CD4-positive, alpha-beta memory T cell (primary cell): ENCODE measurements at regions of chr10 and their contacts with region 1.

Region 1: DNA sequence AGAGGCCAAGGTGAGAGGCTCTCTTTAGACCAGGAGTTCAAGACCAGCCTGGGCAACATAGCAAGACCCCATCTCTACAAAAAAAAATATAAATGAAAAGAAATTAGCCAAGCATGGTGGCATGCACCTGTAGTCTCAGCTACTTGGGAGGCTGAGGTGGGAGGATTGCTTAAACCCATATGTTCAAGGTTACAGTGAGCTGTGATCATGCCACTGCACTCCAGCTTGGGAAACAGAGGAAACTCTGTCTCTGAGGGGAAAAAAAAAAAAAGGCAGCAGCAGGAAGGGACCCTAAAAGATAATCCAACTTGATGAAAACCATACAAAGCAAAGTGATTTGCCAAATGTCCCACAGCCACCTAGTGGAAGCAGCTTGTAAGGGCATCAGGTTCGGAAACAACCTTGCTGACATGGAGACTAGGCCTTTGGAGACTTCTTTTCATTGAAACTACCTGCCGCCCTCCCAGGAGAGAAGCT is 15.6 kb upstream of the PBLD start:
- DNase-seq: peak; percentile 42 to 58 (median 49)
- H3K4me3 ChIP-seq: no peak overlapping the region
- H3K4me3 Mint-ChIP-seq: no peak overlapping the region
- H3K27ac ChIP-seq: no peak overlapping the region
- H3K27ac Mint-ChIP-seq: peak overlapping the region; percentile 4 to 85 (median 79)
- H3K4me1 ChIP-seq: no peaks in the 10 kb centered on the region
- H3K4me1 Mint-ChIP-seq: peaks cover 2 to 8% (median 5%) of the 10 kb centered on the region in 4 donors
- H3K27me3 ChIP-seq: no peaks in the 10 kb centered on the region
- H3K27me3 Mint-ChIP-seq: no peaks in the 10 kb centered on the region

Region 2: DNA sequence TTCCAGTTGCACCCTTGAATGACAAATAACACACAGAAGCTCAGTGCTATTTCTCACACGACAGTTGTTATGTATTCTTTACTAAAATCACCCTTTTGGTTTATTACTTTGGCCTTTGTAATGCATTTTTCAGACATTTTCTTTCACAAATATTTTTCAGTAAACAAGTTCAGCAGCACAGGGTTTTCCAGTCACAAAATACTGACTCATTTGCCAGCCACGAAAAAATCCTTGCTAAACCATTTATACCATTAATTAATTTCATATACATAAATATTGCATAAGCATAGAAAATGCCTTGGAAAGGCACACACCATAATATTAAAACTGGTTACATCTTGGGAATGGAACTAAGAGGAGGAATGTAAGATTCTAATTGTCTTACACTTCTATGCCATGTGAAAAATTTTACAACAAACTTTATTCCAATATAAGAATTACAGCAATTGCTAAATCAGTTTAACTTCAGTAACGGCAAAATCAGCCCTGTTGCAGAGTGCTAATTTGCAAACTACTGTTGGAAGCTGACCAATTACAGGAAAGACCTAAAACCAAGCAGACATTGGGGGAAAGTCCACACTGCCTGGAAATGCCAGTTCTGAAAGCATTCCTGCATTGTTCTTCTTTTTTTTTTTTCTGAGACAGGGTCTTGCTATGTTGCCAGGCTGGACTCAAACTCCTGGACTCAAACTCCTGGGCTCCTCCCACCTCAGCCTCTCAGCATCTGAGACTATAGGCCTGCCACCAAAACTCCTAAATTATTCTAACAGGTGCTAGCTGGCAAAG is 16.0 kb after region 1 on chr10:
- CTCF ChIA-PET with region 1: interaction called, 15 read pairs
- POLR2A ChIA-PET with region 1: no interaction called
- intact Hi-C with region 1: no loop called
- DNase-seq: no peak
- H3K4me3 ChIP-seq: no peak overlapping the region
- H3K4me3 Mint-ChIP-seq: no peak overlapping the region
- H3K27ac ChIP-seq: no peak overlapping the region
- H3K27ac Mint-ChIP-seq: peak overlapping the region in 2 of 7 donors; percentile 27 to 57
- H3K4me1 ChIP-seq: no peaks in the 10 kb centered on the region
- H3K4me1 Mint-ChIP-seq: no peaks in the 10 kb centered on the region
- H3K27me3 ChIP-seq: no peaks in the 10 kb centered on the region
- H3K27me3 Mint-ChIP-seq: no peaks in the 10 kb centered on the region

Region 3: DNA sequence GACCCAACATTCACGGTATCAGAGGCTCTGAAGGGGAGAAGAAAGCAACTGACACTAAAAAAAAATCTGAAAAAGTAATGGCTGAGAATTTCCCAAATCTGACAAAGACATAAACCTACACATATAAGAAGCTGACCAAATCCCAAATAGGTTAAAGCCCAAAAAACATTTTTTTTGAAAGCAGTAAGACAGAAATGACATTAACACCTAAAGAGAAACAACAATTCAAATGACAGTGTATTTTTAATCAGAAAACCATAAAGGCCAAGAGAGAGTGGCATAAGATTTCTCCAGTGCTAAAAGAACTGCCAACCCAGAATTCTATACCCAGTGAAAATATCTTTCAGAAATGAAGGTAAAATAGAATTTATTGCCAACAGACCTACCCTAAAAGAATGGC is 23.3 kb after region 1 on chr10:
- CTCF ChIA-PET with region 1: interaction called, 10 read pairs
- POLR2A ChIA-PET with region 1: no interaction called
- intact Hi-C with region 1: no loop called
- DNase-seq: no peak
- H3K4me3 ChIP-seq: no peak overlapping the region
- H3K4me3 Mint-ChIP-seq: no peak overlapping the region
- H3K27ac ChIP-seq: no peak overlapping the region
- H3K27ac Mint-ChIP-seq: no peak overlapping the region
- H3K4me1 ChIP-seq: no peaks in the 10 kb centered on the region
- H3K4me1 Mint-ChIP-seq: peaks cover 0 to 4% (median 0%) of the 10 kb centered on the region in 4 donors
- H3K27me3 ChIP-seq: no peaks in the 10 kb centered on the region
- H3K27me3 Mint-ChIP-seq: no peaks in the 10 kb centered on the region